AG04450 (cell line): ENCODE measurements at regions of chr7 and their contacts with region 1.

Region 1: DNA sequence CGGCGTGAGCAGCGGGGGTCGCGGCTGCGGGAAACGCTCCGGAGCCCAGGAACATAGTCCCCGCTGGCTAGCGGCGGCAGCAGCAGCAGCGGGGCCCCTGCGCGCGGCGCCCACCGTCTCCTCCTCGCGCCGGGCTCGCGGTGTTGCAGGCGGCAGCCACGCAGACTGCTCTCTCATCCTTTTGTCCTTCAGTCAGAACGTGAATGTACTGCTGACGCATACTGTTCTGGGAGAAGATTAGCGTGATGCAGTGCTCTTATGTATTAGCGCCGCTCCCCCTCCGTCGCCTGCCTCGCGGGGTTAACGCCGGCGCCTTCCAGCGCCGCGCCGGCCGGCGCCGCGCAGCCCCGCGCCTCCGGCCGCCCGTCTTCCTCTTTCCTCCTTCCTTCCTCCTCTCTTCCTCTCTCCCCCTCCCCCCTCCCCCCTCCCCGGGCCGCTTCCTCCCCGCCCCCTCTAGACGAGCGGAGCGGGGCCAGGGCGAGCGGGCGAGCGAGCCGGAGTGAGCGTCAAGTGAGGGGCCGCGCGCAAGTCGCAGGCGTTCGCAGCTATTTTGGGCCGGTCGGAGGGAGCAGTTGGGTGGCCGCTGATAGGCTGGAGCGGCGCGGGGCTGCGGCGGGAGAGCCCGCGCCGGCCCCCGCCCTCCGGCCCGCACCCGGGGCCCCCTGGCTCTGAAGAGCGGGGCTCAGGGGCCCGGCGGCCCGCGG is 816 bp upstream of the LRRC4 start:
- DNase-seq: peak; percentile 77
- H3K4me3 ChIP-seq: peak overlapping the region; percentile 54
- H3K27ac ChIP-seq: no peak overlapping the region
- H3K27me3 ChIP-seq: no peaks in the 10 kb centered on the region
- CTCF ChIP-seq: peak; percentile 40

Region 2: GRCh38 chr7:127816354-127817190 is 215.5 kb before region 1 on chr7:
- CTCF ChIA-PET with region 1: interaction called, 10 read pairs
- POLR2A ChIA-PET with region 1: no interaction called
- DNase-seq: no peak
- H3K4me3 ChIP-seq: no peak overlapping the region
- H3K27ac ChIP-seq: no peak overlapping the region
- H3K27me3 ChIP-seq: no peaks in the 10 kb centered on the region
- CTCF ChIP-seq: no peak

Region 3: DNA sequence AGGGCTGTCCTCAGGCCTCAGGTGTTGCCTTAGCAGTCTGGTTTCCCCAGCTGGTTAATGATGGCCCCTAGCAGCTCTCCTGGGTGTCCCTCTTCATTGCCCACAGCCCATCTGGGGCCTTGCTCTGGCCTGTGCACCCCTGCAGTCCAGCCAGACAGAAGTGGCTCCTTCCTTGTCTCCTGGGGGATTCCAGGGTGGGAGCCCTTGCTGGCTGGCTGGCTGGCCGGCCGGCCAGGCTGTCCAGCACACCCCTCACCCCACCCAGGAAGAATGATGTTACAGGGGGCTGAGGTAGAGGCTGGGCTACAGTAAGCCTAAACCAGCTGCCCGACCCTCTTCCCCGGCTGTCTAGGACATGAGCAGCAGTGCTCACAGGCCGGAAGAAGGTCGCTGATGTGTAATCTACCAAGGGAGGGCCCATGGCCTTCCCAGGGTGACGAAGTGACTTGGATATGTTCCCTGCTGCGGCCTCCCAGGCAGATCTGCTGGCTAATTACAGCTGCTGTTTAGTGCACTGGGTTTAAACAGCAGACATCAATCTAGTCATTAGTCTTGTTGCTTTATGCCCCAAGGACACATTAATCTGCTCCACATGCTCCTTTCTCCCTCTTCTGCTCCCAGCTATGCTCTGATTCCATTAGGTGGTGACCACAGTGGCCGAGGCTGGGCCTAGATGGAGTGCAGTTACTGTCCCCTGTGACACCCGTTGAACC is 53.0 kb after region 1 on chr7:
- CTCF ChIA-PET with region 1: interaction called, 3 read pairs
- POLR2A ChIA-PET with region 1: interaction called, 13 read pairs
- DNase-seq: no peak
- H3K4me3 ChIP-seq: no peak overlapping the region
- H3K27ac ChIP-seq: no peak overlapping the region
- H3K27me3 ChIP-seq: no peaks in the 10 kb centered on the region
- CTCF ChIP-seq: no peak